ENCODE measurements at regions of chr18 and their contacts with region 1.

Region 1: DNA sequence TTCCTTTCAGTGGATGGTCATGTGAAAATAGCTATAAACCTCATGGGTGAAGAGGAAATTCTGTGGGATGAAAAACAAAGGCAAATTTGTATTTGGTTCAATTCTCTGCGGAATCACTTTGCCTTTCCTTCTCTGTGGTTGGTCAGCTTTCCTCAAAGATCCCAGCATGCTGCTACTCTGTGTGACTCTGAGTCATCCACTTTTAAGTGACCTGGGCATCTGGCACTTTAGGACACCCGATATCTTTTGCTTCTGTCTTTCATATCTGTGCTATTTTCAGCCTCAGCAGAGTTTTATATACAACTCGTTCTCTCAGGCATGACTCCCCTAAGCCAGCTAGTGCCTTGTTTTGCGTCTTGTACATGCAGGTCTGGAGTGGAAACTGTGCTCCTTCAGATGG is 217.0 kb upstream of the PIEZO2 start:
- DNase-seq: no peak
- CTCF ChIP-seq: no peak

Region 2: DNA sequence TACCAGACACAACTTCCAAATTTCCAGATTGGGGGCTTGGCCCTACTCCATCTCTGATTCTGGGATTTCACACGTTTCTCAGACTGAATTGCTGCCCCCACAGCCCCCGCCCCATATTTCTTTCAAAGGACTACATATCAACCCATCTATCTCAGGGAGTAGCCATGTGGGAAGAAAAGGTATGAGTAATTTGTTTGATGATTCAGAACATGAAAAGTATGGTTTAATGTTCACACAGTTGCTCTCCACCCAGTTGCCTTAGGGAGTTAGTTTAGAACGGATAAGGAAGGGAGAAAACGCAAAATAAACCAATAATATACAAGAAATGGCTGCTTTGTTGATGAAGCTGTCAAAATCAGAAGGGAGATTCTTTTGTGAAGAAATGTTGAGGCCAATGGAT is 362.1 kb before region 1 on chr18:
- in situ Hi-C with region 1: no loop called
- DNase-seq: no peak
- CTCF ChIP-seq: no peak

Region 3: GRCh38 chr18:11425211-11425610 is 58.8 kb after region 1 on chr18:
- in situ Hi-C with region 1: loop called (anchors 10 kb)
- DNase-seq: no peak
- CTCF ChIP-seq: no peak